Left colon (tissue), 2 donors: ENCODE measurements at regions of chr14 and their contacts with region 1.

Region 1: GRCh38 chr14:29548948-29549370 is 378.7 kb downstream of the PRKD1 start:
- DNase-seq: no peak
- ATAC-seq: peak; percentile 55

Region 2: GRCh38 chr14:30005114-30005808 is 456.3 kb after region 1 on chr14:
- intact Hi-C with region 1: loop called (anchors 2 to 10 kb)
- DNase-seq: no peak
- ATAC-seq: peak; percentile 62